IMR-90 (cell line): ENCODE measurements at regions of chr13 and their contacts with region 1.

Region 1: DNA sequence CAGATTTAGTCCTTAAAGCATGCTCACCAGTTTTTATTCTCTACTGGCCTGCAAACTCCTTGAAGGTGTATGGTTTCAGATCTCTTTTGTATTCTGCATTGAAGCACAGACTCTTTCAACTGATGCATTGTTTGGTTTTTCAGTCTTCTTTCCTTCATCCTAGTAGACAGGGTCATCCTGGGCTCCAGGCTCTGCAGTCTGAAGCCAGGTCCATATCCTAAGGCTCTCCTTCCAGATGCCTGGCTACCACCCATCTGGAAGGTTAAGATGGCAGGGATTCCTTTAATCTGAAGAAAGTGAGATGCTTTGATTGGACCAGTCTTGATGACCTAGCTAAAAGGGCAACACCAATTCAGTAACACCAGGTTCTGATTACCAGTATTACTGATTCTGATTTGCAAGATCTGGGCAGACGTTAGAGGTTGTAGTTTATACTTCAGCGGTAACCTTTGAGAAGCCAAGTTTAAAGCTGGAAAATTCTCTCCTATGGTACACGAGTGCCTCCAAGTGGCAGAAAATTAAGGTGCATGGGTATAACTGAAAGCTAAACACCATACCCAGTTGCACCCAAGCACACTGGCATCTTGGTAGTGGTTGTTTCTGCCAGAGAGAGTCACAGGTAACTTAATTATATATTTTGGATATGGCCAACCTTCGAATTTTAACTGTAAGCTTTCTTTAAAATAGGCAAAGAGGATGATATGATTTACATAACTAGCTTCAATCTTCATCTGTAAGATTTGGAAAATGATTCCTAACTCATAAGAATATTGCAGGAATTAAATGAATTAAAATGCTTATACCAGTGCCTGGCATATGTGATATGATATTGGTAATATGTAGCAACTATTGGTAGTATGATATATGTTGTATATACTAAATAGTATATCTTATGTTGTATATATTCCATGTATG is 1651.9 kb upstream of the MIR17HG start:
- DNase-seq: peak; percentile 8
- ATAC-seq: peak; percentile 72
- H3K4me3 ChIP-seq: no peak overlapping the region
- H3K27ac ChIP-seq: no peak overlapping the region
- H3K4me1 ChIP-seq: no peaks in the 10 kb centered on the region
- H3K27me3 ChIP-seq: no peaks in the 10 kb centered on the region
- CTCF ChIP-seq: 0 out of 2 replicates have a peak, but pooled peaks have one; percentile 28
- POLR2A ChIP-seq: no peak
- RAD21 ChIP-seq: peak; percentile 51

Region 2: DNA sequence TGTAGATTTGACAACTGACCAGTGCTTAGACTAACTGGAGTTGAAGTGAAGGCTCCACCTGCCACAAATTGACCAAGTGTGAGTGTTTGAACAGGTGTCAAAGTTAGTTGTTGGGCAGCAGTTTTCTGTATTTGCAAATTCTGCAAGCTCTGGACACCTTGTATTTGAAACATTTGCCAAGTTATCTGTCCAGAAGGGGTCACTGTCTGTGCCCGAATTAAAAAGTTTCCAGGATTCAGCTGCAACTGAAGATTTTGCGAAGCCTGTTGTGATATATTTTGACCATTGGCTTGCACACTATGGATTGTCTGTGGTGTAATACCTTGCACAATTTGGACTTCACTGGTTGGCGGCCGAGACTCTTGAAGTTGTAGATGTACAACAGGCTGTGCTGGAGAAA is 333.7 kb before region 1 on chr13:
- CTCF ChIA-PET with region 1: no interaction called
- POLR2A ChIA-PET with region 1: no interaction called
- dilution Hi-C with region 1: no loop called
- in situ Hi-C with region 1: no loop called
- intact Hi-C with region 1: loop called (anchors 2 kb)
- DNase-seq: peak; percentile 0
- ATAC-seq: no peak
- H3K4me3 ChIP-seq: no peak overlapping the region
- H3K27ac ChIP-seq: no peak overlapping the region
- H3K4me1 ChIP-seq: no peaks in the 10 kb centered on the region
- H3K27me3 ChIP-seq: no peaks in the 10 kb centered on the region
- CTCF ChIP-seq: no peak
- POLR2A ChIP-seq: no peak
- RAD21 ChIP-seq: no peak

Region 3: DNA sequence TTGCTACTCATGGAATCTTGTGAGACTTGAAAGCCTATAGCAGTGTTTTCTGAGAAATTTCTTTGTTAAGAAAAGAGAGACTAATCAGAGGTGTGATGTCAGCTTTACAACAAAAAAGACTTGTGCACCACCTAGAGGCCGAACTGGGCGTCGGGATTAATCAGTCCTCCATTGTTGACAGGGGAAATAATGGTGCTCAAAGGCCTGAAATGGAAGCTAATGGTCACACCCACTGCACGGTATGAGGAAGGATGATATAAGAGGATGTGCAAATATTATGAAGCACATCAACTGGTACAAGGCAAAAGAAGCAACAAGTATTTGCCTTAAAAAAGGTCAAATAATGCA is 1171.7 kb after region 1 on chr13:
- CTCF ChIA-PET with region 1: no interaction called
- POLR2A ChIA-PET with region 1: no interaction called
- dilution Hi-C with region 1: no loop called
- in situ Hi-C with region 1: no loop called
- intact Hi-C with region 1: loop called (anchors 5 kb)
- DNase-seq: peak; percentile 27
- ATAC-seq: peak; percentile 75
- H3K4me3 ChIP-seq: no peak overlapping the region
- H3K27ac ChIP-seq: no peak overlapping the region
- H3K4me1 ChIP-seq: no peaks in the 10 kb centered on the region
- H3K27me3 ChIP-seq: no peaks in the 10 kb centered on the region
- CTCF ChIP-seq: peak; percentile 67
- POLR2A ChIP-seq: no peak
- RAD21 ChIP-seq: peak; percentile 68